Mammary epithelial cell (primary cell): ENCODE measurements at regions of chr2 and their contacts with region 1.

Region 1: DNA sequence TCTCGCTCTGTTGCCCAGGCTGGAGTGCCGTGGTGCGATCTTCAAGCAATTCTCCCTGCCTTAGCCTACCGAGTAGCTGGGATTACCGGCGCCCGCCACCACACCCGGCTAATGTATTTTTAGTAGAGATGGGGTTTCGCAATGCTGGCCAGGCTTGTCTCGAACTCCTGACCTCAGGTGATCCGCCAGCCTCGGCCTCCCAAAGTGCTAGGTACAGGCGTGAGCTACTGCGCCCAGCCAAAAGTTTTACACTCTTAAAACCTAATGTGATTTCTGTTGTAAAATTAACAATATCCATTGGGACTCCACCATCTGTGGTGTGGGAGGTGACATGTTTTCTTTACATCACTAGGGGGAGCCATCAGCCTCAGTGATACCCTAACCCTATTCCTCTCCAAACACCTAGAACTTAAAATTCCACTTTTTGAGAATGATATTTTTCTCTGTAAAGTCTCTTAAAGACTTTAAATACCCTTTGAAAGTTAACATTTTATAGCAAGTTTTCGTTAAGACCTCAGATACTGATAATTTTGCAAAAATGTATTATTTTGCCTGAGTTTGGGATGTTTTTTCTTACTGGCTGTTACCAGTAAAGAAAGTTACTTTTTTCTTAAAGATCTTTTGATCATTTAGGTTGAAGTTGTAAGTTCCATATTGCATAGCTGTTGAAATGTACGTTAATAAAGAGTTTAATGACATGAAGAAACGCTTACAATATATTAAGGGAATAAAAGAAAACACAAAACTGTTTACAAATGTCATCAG is 11.6 kb upstream of the EIF2AK2 start:
- DNase-seq: peak; percentile 36
- H3K4me3 ChIP-seq: no peak overlapping the region
- H3K27ac ChIP-seq: no peak overlapping the region
- H3K4me1 ChIP-seq: no peaks in the 10 kb centered on the region
- H3K27me3 ChIP-seq: no peaks in the 10 kb centered on the region
- CTCF ChIP-seq: peak; percentile 73 to 81

Region 2: GRCh38 chr2:37215250-37215649 is 46.9 kb after region 1 on chr2:
- CTCF ChIA-PET with region 1: no interaction called
- dilution Hi-C with region 1: no loop called
- in situ Hi-C with region 1: no loop called
- intact Hi-C with region 1: no loop called
- DNase-seq: no peak
- H3K4me3 ChIP-seq: no peak overlapping the region
- H3K27ac ChIP-seq: no peak overlapping the region
- H3K4me1 ChIP-seq: peaks cover 6% of the 10 kb centered on the region
- H3K27me3 ChIP-seq: no peaks in the 10 kb centered on the region
- CTCF ChIP-seq: no peak

Region 3: DNA sequence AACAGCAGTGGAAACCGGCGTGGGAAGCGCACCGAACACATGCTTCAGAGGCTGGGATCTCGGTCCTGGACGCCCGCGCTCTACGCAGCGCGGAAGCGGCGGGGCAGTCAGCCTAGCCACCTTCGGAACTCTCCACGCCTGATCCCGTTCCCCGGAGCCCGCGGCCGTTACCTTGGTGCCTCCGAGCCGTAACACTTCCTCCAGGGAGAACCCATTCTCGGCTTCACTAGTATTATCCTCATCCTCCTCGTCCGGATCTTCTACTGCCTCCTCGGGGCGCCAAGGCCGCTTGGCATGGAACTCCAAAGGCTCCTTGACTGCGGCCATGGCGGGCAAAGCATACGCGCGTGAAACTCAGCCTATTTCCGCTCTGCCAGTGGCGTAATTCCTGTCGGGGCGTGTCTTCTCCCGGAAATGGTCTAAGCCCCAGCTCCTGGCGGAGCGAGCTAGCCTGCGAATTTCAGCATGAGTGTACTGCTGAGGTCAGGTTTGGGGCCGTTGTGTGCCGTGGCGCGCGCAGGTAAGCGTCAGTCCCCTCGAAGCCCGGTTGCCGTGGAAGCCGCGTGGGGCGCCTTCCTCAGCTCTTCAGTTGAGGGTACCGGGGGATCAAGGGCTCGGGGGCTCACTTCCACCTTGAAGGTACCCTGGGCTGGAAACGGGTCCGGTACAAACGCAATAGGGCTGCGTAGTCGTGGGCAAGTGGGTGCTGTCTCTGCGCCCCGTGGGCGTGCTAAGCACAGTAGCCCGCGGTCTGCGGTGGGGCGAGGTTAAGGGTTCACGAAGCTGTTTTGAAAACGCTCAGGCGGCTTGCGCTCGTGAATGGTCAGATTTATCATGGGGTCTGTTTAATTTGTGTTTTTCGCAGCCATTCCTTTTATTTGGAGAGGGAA is 63.1 kb after region 1 on chr2 and contains the starts of genes CEBPZ and NDUFAF7:
- CTCF ChIA-PET with region 1: no interaction called
- dilution Hi-C with region 1: no loop called
- in situ Hi-C with region 1: no loop called
- intact Hi-C with region 1: loop called (anchors 1 kb)
- DNase-seq: peak; percentile 94
- H3K4me3 ChIP-seq: peak within 1 kb of the TSS; percentile 80 to 95 (median 87)
- H3K27ac ChIP-seq: peak within 1 kb of the TSS; percentile 81
- H3K4me1 ChIP-seq: peaks cover 13% of the 10 kb centered on the region
- H3K27me3 ChIP-seq: no peaks in the 10 kb centered on the region
- CTCF ChIP-seq: no peak
- total RNA-seq, gene CEBPZ: 30.2 to 58.7 TPM
- total RNA-seq, gene NDUFAF7: 9.3 to 16.5 TPM

Region 4: GRCh38 chr2:37276291-37276690 is 107.9 kb after region 1 on chr2:
- CTCF ChIA-PET with region 1: no interaction called
- dilution Hi-C with region 1: no loop called
- in situ Hi-C with region 1: no loop called
- intact Hi-C with region 1: loop called (anchors 5 kb)
- DNase-seq: no peak
- H3K4me3 ChIP-seq: no peak overlapping the region
- H3K27ac ChIP-seq: no peak overlapping the region
- H3K4me1 ChIP-seq: no peaks in the 10 kb centered on the region
- H3K27me3 ChIP-seq: no peaks in the 10 kb centered on the region
- CTCF ChIP-seq: no peak

Region 5: GRCh38 chr2:37343537-37344434 is 175.4 kb after region 1 on chr2:
- CTCF ChIA-PET with region 1: no interaction called
- dilution Hi-C with region 1: no loop called
- in situ Hi-C with region 1: no loop called
- intact Hi-C with region 1: no loop called
- DNase-seq: peak; percentile 28
- H3K4me3 ChIP-seq: no peak overlapping the region
- H3K27ac ChIP-seq: no peak overlapping the region
- H3K4me1 ChIP-seq: peaks cover 22% of the 10 kb centered on the region
- H3K27me3 ChIP-seq: no peaks in the 10 kb centered on the region
- CTCF ChIP-seq: peak; percentile 28 to 51

Region 6: GRCh38 chr2:37376421-37377186 is 208.2 kb after region 1 on chr2:
- CTCF ChIA-PET with region 1: no interaction called
- dilution Hi-C with region 1: no loop called
- in situ Hi-C with region 1: no loop called
- intact Hi-C with region 1: loop called (anchors 10 kb)
- DNase-seq: peak; percentile 88
- H3K4me3 ChIP-seq: peak overlapping the region in 1 of 3 experiments; percentile 5
- H3K27ac ChIP-seq: peak overlapping the region; percentile 71
- H3K4me1 ChIP-seq: peaks cover 29% of the 10 kb centered on the region
- H3K27me3 ChIP-seq: no peaks in the 10 kb centered on the region
- CTCF ChIP-seq: no peak